Activated naive CD4-positive, alpha-beta T cell treated with anti-CD3 and anti-CD28 coated beads for 36 hours (primary cell): ENCODE measurements at regions of chr3 and their contacts with region 1.

Region 1: GRCh38 chr3:69379661-69380060 is 6.2 kb downstream of the FRMD4B start:
- DNase-seq: no peak
- H3K4me3 Mint-ChIP-seq: no peak overlapping the region
- H3K27ac Mint-ChIP-seq: no peak overlapping the region
- H3K4me1 Mint-ChIP-seq: no peaks in the 10 kb centered on the region
- H3K27me3 Mint-ChIP-seq: peaks cover 15% of the 10 kb centered on the region

Region 2: DNA sequence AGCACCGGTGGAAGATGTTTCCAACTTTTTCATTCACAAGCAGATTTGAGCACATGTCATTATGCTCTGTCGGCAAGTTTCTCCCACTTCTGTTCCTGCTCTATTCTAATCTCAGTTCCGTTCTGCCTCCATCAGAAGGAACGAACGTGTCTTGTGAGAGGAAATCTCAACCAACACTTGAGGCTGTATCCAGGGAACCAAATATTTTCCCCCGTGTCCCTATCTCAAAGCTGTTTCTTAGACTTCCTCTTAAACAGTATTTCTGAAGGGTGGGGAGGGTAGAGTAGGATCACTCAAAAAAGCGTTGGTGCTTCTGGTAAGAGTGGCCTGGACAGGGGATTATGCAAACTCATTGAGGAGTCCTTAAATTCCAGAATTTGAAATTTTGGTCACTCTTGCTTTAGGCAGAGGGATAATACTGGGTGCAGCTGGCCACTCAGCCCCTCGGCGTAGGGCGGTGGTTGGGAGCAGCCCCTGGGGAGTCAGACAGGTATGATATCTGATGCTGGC is 48.7 kb before region 1 on chr3:
- CTCF ChIA-PET with region 1: interaction called, 3 read pairs
- intact Hi-C with region 1: loop called (anchors 5 kb)
- DNase-seq: no peak
- H3K4me3 Mint-ChIP-seq: no peak overlapping the region
- H3K27ac Mint-ChIP-seq: no peak overlapping the region
- H3K4me1 Mint-ChIP-seq: peaks cover 29% of the 10 kb centered on the region
- H3K27me3 Mint-ChIP-seq: no peaks in the 10 kb centered on the region